ENCODE measurements at regions of chr1 and their contacts with region 1.

Region 1: DNA sequence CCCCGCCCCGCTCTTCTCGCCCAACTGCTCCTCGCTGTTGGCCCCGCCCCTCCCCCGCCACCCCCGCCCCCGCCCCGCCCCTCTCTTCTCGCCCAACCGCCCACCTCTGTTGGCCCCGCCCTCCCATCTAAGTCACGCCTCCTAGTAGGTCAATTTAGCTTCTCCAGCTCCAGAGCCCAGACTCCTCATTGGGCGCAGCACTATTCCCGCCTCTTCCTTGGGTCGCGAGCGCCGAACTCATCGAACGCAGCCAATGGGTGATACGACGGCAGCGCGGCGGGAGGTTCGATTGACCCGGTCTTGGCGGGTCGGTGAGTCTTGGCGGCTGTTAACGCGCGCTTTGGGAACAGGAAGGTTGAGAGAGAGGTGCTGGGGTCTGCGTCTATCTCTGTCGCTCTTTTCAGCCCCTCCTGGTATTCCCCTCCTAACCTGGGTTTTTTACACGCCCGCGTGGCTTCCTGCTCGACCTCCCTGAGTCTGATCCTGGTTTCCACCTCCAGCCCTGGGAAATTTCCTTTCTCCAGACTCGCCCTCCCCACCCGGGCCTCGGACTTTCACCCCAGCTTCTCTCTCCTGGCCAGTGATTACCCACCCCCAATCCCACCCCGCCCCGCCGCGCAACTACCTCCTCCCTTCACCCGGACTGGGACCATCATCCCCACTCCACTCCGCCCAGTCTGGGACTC is at the start of gene RAD54L:
- DNase-seq: peak; percentile 95 to 99
- ATAC-seq: peak; percentile 93 to 99 (median 95)
- H3K4me3 ChIP-seq: peak within 1 kb of the TSS; percentile 55 to 88 (median 62)
- H3K27ac ChIP-seq: peak within 1 kb of the TSS; percentile 39 to 89 (median 82)
- H3K4me1 ChIP-seq: peaks cover 2 to 22% (median 13%) of the 10 kb centered on the region in 9 donors
- H3K27me3 ChIP-seq: no peaks in the 10 kb centered on the region
- CTCF ChIP-seq: no peak
- total RNA-seq, gene RAD54L: 0.42 to 2.8 (median 0.68) TPM in 9 of 10 donors, not detected in the other

Region 2: GRCh38 chr1:46062651-46063319 is 184.8 kb before region 1 on chr1:
- intact Hi-C with region 1: no loop called
- DNase-seq: peak in 1 of 2 donors; percentile 16
- ATAC-seq: peak in 2 of 8 donors; percentile 35 to 48
- H3K4me3 ChIP-seq: no peak overlapping the region
- H3K27ac ChIP-seq: peak overlapping the region in 3 of 10 donors; percentile 29 to 57 (median 31)
- H3K4me1 ChIP-seq: peaks cover 0 to 32% (median 0%) of the 10 kb centered on the region in 9 donors
- H3K27me3 ChIP-seq: no peaks in the 10 kb centered on the region
- CTCF ChIP-seq: no peak

Region 3: DNA sequence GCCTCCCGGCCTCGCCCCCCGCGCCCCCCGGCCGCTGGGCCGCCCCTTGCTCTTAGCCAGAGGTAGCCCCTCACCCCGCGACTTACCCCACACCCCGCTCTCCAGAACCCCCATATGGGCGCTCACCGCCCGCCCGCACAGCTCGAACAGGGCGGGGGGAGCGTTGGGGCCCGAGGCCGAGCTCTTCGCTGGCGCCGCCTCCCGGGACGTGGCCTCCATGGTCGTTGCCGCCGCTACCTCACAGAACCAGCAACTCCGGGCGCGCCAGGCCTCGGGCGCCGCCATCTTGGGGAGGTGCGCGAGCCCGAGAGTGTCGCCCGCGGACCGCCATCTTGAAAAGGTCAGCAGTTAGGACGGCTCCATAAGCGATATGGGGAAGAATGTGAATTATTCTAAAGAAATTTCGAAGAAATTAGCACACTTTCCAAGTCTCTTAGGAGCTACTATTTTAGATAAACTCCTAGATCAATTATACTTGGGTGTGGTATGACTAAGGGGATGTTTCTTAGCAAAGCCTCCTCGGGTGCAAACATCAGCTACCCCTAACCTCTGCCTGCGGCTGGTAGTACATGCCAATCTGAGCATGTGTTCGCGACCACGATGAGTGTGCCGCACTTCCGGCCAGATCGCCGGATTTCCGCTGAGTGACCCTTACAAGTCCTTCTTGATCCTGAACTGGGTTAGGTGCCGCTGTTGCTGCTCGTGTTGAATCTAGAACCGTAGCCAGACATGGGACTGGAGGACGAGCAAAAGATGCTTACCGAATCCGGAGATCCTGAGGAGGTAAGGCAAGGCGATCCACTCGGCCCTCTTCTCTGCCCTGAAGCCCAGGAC is 55.7 kb after region 1 on chr1 and contains the starts of genes LRRC41 and UQCRH:
- intact Hi-C with region 1: loop called in 4 of 10 experiments (anchors 2 to 5 kb)
- DNase-seq: peak; percentile 93 to 96
- ATAC-seq: peak; percentile 91 to 96 (median 92)
- H3K4me3 ChIP-seq: peak within 1 kb of the TSS; percentile 76 to 98 (median 90)
- H3K27ac ChIP-seq: peak within 1 kb of the TSS; percentile 95 to 99 (median 98)
- H3K4me1 ChIP-seq: peaks cover 13 to 76% (median 69%) of the 10 kb centered on the region in 9 donors
- H3K27me3 ChIP-seq: no peaks in the 10 kb centered on the region
- CTCF ChIP-seq: peak in 1 of 9 donors; percentile 27
- total RNA-seq, gene LRRC41: 36.7 to 52.5 (median 43.6) TPM
- total RNA-seq, gene UQCRH: 759 to 1,195 (median 1,005) TPM

Region 4: GRCh38 chr1:46340404-46341221 is 93.0 kb after region 1 on chr1 and contains the start of gene NSUN4:
- intact Hi-C with region 1: loop called in 4 of 10 experiments (anchors 5 to 10 kb)
- DNase-seq: peak; percentile 90 to 93
- ATAC-seq: peak; percentile 93 to 98 (median 95)
- H3K4me3 ChIP-seq: peak within 1 kb of the TSS; percentile 40 to 91 (median 66)
- H3K27ac ChIP-seq: peak within 1 kb of the TSS; percentile 86 to 99 (median 96)
- H3K4me1 ChIP-seq: peaks cover 0 to 35% (median 21%) of the 10 kb centered on the region in 9 donors
- H3K27me3 ChIP-seq: no peaks in the 10 kb centered on the region
- CTCF ChIP-seq: peak; percentile 15 to 86 (median 68)
- total RNA-seq, gene NSUN4: 12.5 to 18.7 (median 16.5) TPM

Region 5: GRCh38 chr1:46489638-46490405 is 242.2 kb after region 1 on chr1 and contains the start of gene DMBX1:
- intact Hi-C with region 1: no loop called
- DNase-seq: peak in 1 of 2 donors; percentile 20
- ATAC-seq: peak in 6 of 8 donors; percentile 33 to 66 (median 50)
- H3K4me3 ChIP-seq: peak within 1 kb of the TSS in 9 of 10 donors; percentile 22 to 46 (median 38)
- H3K27ac ChIP-seq: no peak within 1 kb of the TSS
- H3K4me1 ChIP-seq: peaks cover 4 to 26% (median 19%) of the 10 kb centered on the region in 9 donors
- H3K27me3 ChIP-seq: peaks cover 37 to 100% (median 100%) of the 10 kb centered on the region in 7 donors
- CTCF ChIP-seq: no peak
- total RNA-seq, gene DMBX1: not detected

Measured in heart right ventricle (tissue), 16 donors.